Right cardiac atrium (tissue), 5 donors: ENCODE measurements at regions of chr1 and their contacts with region 1.

Region 1: GRCh38 chr1:99707535-99708142 is 58.8 kb downstream of the FRRS1 start:
- DNase-seq: peak; percentile 68 to 85 (median 74)
- ATAC-seq: peak; percentile 82 to 83
- H3K4me3 ChIP-seq: no peak overlapping the region
- H3K27ac ChIP-seq: no peak overlapping the region
- H3K4me1 ChIP-seq: no peaks in the 10 kb centered on the region
- H3K27me3 ChIP-seq: no peaks in the 10 kb centered on the region

Region 2: GRCh38 chr1:99170516-99170915 is 537.1 kb before region 1 on chr1:
- intact Hi-C with region 1: loop called in 3 of 4 experiments (anchors 5 to 10 kb)
- DNase-seq: no peak
- ATAC-seq: no peak
- H3K4me3 ChIP-seq: no peak overlapping the region
- H3K27ac ChIP-seq: no peak overlapping the region
- H3K4me1 ChIP-seq: no peaks in the 10 kb centered on the region
- H3K27me3 ChIP-seq: no peaks in the 10 kb centered on the region

Region 3: DNA sequence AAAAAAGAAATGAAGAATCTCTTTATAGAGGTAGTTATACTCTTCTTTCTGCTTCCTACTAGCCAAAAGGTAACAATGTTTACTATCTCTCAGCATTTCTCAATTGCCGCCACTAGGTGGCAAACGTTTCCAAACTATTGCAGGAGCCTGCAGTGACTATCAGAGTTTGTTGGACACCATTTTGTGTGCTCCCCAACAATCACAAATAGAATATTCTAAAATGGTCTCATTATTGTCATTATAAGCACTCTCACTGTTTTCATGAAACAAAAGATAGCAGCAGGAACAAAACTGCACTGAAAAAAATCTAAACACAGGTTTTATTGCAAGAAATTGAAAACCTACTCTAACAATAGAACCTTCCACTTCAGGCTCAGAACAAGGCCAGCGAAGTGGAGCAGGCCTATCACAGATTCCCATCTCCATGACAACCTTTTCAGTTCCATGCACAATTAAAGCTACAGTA is 527.3 kb before region 1 on chr1:
- intact Hi-C with region 1: loop called in 3 of 4 experiments (anchors 5 to 10 kb)
- DNase-seq: peak; percentile 32 to 83 (median 67)
- ATAC-seq: peak; percentile 92 to 95
- H3K4me3 ChIP-seq: no peak overlapping the region
- H3K27ac ChIP-seq: no peak overlapping the region
- H3K4me1 ChIP-seq: no peaks in the 10 kb centered on the region
- H3K27me3 ChIP-seq: no peaks in the 10 kb centered on the region

Region 4: DNA sequence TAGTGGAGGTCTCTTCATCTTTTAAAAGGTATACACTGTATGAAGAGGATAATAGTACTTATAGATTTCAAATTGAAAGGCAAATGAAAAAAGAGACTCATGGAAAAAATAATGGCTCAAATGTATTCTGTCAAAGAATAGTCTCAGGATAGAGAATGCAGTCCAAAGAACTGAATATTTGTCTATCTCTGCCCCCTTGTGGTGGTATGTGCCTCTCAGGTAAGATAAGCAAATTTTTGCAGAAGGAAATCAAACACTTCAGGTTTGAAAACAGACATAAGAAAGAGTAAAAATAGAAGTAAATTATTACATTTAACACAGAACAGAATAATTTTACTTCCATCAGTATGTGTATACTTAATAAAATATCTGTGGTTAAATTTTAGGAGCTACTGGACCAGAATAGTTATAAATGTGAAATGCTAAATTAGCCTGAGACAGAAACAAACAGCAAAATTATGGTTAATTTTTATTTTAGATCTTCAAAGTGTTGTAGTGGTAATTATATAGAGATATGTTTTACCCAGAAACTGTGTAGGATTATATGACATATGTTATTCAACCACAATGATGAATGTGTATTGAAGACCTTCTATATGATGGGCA is 226.1 kb before region 1 on chr1:
- intact Hi-C with region 1: loop called in 1 of 4 experiments (anchors 10 kb)
- DNase-seq: no peak
- ATAC-seq: peak; percentile 52 to 59
- H3K4me3 ChIP-seq: no peak overlapping the region
- H3K27ac ChIP-seq: no peak overlapping the region
- H3K4me1 ChIP-seq: no peaks in the 10 kb centered on the region
- H3K27me3 ChIP-seq: no peaks in the 10 kb centered on the region